ENCODE measurements at regions of chr11 and their contacts with region 1.

Region 1: GRCh38 chr11:749731-750130 is 2.5 kb downstream of the TALDO1 start:
- DNase-seq: no peak

Region 2: GRCh38 chr11:342328-342727 is 407.4 kb before region 1 on chr11:
- in situ Hi-C with region 1: no loop called
- DNase-seq: no peak

Region 3: GRCh38 chr11:695538-696248 is 54.0 kb before region 1 on chr11 and contains the start of gene TMEM80:
- in situ Hi-C with region 1: loop called (anchors 10 kb)
- DNase-seq: peak; percentile 97

Region 4: GRCh38 chr11:809287-810039 is 59.7 kb after region 1 on chr11 and contains the start of gene RPLP2:
- in situ Hi-C with region 1: no loop called
- DNase-seq: peak; percentile 97

Measured in KBM-7 (cell line).